RWPE1 (cell line): ENCODE measurements at regions of chr9 and their contacts with region 1.

Region 1: GRCh38 chr9:126500684-126501382 is 112.9 kb upstream of the LMX1B start:
- DNase-seq: peak; percentile 90
- H3K27ac ChIP-seq: no peak overlapping the region
- CTCF ChIP-seq: peak; percentile 99

Region 2: GRCh38 chr9:126309427-126310189 is 191.2 kb before region 1 on chr9:
- CTCF ChIA-PET with region 1: no interaction called
- POLR2A ChIA-PET with region 1: no interaction called
- DNase-seq: no peak
- H3K27ac ChIP-seq: no peak overlapping the region
- CTCF ChIP-seq: no peak

Region 3: DNA sequence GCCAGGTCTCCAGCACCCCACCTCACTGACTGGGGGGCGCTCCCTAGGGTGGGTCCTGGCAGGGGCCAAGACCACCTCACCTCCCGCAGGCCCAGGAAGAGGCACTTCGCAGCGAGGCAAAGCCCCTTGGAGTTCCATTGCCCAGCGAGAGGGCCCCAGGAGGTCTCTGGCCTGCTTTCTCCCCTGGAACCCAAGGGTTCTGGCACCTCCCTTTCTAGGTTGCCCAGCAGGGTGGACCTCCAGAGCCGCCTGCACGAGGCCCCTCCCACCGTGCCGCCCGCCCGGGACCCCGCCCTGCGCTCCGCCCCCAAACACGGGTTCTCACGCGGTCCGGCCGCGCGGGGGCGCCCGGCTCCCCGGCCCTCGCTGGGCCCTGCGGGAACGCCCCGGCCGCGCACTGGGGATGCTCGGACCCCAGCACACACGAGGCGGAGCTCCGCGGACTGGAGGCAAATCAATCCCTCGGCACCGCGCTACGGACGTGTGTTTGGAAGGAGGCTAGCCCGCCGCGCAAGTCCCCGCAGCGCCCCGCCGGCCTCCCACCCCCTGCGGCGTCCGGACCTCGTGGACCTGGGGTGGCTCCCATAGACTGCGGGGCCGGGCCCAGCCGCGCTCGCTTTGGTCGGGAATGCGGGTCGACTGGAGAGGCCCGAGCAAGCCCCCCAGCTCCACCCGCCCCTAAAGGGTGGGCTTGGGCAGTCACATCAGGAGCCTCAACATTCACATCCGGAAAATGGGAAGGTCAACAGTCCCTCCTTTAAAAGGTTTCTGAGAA is 13.4 kb after region 1 on chr9:
- CTCF ChIA-PET with region 1: interaction called, 60 read pairs
- POLR2A ChIA-PET with region 1: no interaction called
- DNase-seq: peak; percentile 69
- H3K27ac ChIP-seq: no peak overlapping the region
- CTCF ChIP-seq: peak; percentile 60; the same call in 1 of the 2 replicates

Region 4: GRCh38 chr9:126545106-126545505 is 44.3 kb after region 1 on chr9:
- CTCF ChIA-PET with region 1: interaction called, 17 read pairs
- POLR2A ChIA-PET with region 1: no interaction called
- DNase-seq: no peak
- H3K27ac ChIP-seq: no peak overlapping the region
- CTCF ChIP-seq: no peak

Region 5: DNA sequence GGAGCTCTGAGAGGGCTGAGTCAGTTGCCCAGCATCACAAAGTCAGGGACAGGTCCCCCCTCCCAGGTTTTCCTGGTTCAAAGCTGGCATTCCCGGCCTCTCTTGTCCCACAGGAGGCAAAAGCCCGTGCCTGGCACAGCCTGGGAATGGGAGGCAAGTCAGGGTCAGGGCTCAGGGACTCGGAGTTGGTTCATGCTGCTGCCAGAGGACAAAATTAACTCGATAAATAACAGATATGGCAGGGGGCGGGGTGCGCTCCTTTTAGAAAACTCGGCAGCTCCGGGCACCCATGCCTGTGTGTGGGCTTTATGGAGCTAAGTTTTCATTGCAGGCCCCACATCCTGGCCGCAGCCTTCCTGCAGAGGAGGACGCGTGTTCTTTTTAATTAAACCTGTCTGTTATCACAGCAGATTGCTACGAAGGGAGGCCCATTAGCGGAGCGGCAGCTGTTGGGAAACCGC is 50.1 kb after region 1 on chr9:
- CTCF ChIA-PET with region 1: interaction called, 299 read pairs
- POLR2A ChIA-PET with region 1: no interaction called
- DNase-seq: no peak
- H3K27ac ChIP-seq: no peak overlapping the region
- CTCF ChIP-seq: no peak

Region 6: DNA sequence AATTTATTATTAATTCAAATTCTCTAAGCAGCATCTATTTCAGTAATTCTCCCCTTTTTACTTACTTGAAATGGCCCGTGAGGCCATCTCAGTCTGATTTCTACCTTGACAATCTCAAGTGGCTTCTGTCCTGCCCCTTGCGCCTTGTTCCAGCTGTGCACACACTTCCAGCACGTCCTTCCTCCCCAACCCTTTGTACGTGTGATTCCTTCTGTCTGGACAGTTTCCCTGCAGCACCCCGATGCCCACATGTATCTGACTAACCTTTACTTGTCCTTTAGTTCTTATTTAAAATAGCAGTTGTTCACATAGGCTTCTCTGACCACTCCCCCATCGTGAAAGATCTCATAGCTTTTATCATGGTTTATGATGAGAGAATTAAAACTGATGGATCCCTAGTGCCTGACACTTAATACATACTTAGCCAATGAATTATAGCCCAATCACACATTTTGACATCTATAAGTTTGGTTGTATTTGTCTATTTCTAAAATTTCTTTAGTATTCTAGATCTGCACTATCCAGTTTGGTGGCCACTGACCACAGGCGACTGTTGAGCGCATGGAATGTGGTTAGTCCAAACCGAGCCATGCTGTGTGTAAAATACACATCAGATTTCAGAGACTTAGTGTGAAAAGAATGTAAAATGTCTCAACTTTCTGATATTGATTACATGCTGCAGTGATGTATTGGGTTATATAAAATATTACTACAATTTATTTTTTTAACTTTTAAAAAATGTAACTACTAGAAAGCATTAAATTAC is 373.9 kb after region 1 on chr9:
- CTCF ChIA-PET with region 1: no interaction called
- POLR2A ChIA-PET with region 1: no interaction called
- DNase-seq: no peak
- H3K27ac ChIP-seq: no peak overlapping the region
- CTCF ChIP-seq: no peak